Activated naive CD8-positive, alpha-beta T cell treated with anti-CD3 and anti-CD28 coated beads, Interleukin-2, amount 10 ng/mL, durations not matched to agents 7 days and 5 days (primary cell): ENCODE measurements at regions of chr2 and their contacts with region 1.

Region 1: GRCh38 chr2:39227628-39228412 is 15.9 kb downstream of the CDKL4 start:
- DNase-seq: peak; percentile 90
- ATAC-seq: peak; percentile 79
- H3K4me3 Mint-ChIP-seq: peak overlapping the region; percentile 79
- H3K27ac Mint-ChIP-seq: peak overlapping the region; percentile 90
- H3K4me1 Mint-ChIP-seq: peaks cover 46% of the 10 kb centered on the region
- H3K27me3 Mint-ChIP-seq: no peaks in the 10 kb centered on the region

Region 2: DNA sequence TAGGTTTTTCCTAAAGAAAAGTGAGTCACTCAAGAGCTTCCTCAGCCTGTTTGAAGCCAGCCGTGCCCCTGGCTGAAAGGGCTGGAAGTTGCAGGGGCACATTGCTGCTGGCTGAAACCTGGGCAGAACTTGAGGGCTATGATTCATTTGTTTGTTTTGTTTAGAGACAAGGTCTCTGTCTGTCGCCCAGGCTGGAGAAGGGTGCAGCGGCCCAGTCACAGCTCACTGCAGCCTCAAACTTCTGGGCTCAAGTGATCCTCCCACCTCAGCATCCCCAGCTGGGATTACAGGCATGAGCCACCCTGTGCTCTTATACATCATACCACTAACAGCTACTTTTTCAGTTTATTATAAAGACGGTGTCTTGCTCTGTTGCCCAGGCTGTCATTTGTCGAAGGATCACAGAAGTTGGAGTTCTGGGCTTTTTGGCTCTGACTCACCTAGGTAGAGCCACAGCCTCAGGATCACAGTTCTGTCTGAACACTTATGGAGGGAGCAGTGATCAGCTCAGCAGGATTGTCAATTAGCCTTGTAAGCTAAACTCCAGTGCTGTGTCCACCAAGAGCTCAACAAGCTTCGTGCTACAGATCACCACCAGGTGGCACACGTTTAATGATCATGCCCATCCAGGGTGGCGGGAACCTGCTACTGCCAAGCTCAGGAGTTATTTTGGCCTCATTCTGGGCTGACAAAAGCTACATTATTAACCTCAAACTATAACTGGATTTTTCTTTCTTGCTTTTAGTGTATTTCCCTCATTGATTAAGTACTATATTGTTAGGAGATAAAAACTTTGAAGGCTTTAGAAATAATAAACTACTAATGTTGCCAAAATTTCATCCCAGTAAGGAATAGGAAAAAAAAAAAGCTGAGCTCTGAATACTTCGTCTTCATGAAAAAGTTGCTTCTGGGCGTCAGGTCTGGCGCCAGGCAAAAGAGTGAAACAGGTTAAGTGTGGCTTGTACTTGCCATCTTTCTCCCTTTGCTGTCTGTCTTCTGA is 280.3 kb before region 1 on chr2:
- POLR2A ChIA-PET with region 1: interaction called, 15 read pairs
- DNase-seq: peak; percentile 58
- ATAC-seq: peak; percentile 85
- H3K4me3 Mint-ChIP-seq: no peak overlapping the region
- H3K27ac Mint-ChIP-seq: no peak overlapping the region
- H3K4me1 Mint-ChIP-seq: peaks cover 2% of the 10 kb centered on the region
- H3K27me3 Mint-ChIP-seq: peaks cover 8% of the 10 kb centered on the region

Region 3: GRCh38 chr2:39124000-39124745 is 103.6 kb before region 1 on chr2:
- POLR2A ChIA-PET with region 1: interaction called, 166 read pairs
- DNase-seq: peak; percentile 96
- ATAC-seq: peak; percentile 72
- H3K4me3 Mint-ChIP-seq: peak overlapping the region; percentile 95
- H3K27ac Mint-ChIP-seq: peak overlapping the region; percentile 96
- H3K4me1 Mint-ChIP-seq: peaks cover 53% of the 10 kb centered on the region
- H3K27me3 Mint-ChIP-seq: no peaks in the 10 kb centered on the region

Region 4: DNA sequence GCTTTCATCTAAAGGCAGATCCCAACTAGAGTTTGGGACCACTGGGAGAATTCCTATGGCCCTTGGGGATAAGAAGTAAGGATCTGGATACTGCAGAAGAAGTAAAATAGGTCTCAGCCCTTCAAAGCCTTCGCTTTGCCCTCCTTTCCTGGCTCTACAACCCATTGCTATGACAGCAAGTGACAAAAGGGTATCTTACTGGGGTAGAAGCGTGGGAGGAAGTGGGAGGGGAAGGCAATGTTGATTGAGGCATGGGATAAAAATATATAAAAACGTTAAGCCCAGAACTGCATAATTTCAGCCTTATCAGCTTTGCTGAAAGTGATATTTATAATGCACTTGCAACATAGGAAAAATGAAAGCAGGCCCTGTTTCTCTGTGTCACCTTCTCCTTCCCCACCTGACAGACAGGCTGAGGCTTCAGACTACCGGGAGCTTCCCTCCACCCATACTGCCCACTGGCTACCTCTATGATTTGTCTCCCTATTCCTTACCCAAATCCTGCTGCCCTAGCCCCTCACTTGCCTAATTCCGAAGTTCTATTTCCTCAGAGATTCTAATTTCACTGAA is 92.0 kb before region 1 on chr2:
- POLR2A ChIA-PET with region 1: interaction called, 16 read pairs
- DNase-seq: no peak
- ATAC-seq: peak; percentile 49
- H3K4me3 Mint-ChIP-seq: peak overlapping the region; percentile 62
- H3K27ac Mint-ChIP-seq: peak overlapping the region; percentile 97
- H3K4me1 Mint-ChIP-seq: peaks cover 68% of the 10 kb centered on the region
- H3K27me3 Mint-ChIP-seq: no peaks in the 10 kb centered on the region

Region 5: DNA sequence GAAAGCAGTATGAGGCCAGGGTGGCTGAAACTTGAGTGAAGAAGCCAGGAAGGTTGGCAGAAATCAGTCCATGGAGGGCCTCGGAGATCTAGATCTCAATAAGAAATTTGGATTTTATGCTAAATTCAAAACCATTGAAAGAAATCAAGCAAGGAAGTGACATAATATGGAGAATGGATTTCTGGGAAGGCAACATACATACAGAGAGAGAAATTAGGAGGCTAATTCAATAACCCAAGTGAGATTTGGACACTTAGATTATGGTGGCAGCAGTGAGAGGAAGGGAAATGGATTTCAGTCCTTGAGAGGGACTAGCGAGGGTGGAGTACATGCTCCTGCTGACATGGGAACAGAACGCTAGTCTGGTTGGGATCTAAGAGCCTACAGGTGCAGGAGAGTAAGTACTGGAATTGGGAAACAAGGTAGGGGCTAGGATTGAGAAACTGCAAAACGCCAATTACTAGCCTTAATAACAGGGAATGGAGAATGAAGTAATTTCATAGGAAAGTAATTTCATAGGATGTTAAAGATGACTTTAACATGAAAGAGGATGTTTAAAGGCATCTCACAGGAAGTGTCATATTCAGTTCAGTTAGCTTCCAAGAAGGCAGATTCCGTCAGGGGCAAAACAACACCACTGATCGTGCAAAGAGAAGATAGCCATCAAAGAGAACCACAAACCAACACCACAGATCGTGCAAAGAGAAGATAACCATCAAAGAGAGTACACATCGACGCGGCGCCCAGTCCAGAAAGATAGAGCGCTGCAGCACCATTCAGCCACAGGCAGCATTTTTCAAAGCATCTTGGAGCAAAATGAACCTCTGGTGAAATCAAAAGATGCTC is 11.3 kb before region 1 on chr2:
- POLR2A ChIA-PET with region 1: interaction called, 28 read pairs
- DNase-seq: peak; percentile 73
- ATAC-seq: peak; percentile 88
- H3K4me3 Mint-ChIP-seq: peak overlapping the region; percentile 71
- H3K27ac Mint-ChIP-seq: peak overlapping the region; percentile 96
- H3K4me1 Mint-ChIP-seq: peaks cover 68% of the 10 kb centered on the region
- H3K27me3 Mint-ChIP-seq: no peaks in the 10 kb centered on the region

Region 6: DNA sequence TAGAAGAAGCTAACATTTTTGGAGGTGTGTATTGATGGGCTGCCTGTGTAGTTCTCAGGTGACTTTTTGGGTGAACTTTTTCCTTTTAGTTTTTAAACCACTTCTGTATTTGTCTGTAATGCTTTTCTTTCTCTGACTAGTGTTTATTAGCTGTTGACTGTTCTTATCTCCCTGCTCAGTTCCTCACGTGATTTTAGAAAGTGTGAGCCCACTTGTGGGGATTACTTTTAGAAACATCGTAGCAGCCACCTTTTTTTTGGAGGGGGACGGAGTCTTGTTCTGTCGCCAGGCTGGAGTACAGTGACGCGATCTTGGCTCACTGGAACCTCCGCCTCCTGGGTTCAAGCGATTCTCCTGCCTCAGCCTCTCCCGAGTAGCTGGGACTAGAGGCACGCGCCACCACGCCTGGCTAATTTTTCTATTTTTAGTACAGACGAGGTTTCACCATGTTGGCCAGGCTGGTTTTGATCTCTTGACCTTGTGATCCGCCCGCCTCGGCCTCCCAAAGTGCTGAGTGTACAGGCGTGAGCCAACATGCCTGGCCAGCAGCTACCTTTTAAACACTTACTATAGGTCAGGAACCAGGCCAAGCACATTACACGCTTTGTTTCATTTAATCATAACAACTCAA is 25.2 kb after region 1 on chr2:
- POLR2A ChIA-PET with region 1: no interaction called
- DNase-seq: no peak
- ATAC-seq: no peak
- H3K4me3 Mint-ChIP-seq: no peak overlapping the region
- H3K27ac Mint-ChIP-seq: no peak overlapping the region
- H3K4me1 Mint-ChIP-seq: peaks cover 2% of the 10 kb centered on the region
- H3K27me3 Mint-ChIP-seq: no peaks in the 10 kb centered on the region

Region 7: DNA sequence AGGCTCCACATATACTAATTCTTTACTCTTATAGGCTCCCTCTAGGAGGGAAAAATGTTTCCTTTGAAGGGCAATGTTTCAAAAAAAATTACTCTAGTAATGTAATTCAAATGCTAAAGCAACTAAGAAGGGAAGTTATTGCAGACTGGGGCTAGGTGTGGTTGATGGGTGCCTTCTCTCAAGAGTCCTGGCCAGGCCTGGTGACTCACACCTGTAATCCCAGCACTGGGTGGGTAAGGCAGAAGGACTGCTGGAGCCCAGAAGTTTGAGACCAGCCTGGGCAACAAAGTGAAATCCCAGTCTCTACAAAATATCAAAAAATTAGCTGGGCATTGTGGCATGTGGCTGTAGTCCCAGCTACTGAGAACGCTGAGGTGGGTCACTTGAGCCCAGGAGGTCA is 47.2 kb after region 1 on chr2:
- POLR2A ChIA-PET with region 1: no interaction called
- DNase-seq: no peak
- ATAC-seq: no peak
- H3K4me3 Mint-ChIP-seq: no peak overlapping the region
- H3K27ac Mint-ChIP-seq: no peak overlapping the region
- H3K4me1 Mint-ChIP-seq: no peaks in the 10 kb centered on the region
- H3K27me3 Mint-ChIP-seq: no peaks in the 10 kb centered on the region

Region 8: DNA sequence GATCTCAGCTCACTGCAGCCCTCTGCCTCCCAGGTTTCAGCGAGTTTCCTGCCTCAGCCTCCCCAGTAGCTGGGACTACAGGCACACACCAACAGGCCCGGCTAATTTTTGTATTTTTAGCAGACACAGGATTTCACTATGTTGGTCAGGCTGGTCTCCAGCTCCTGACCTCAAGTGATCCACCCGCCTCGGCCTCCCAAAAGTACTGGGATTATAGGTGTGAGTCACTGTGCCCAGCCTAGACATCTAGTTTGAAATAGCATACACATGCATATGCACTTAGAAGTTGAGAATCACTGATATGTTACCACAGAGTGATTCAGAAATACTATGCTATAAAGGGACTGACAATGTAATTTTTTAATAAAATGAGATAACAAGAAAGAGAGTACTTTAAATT is 85.8 kb after region 1 on chr2:
- POLR2A ChIA-PET with region 1: no interaction called
- DNase-seq: no peak
- ATAC-seq: no peak
- H3K4me3 Mint-ChIP-seq: no peak overlapping the region
- H3K27ac Mint-ChIP-seq: no peak overlapping the region
- H3K4me1 Mint-ChIP-seq: no peaks in the 10 kb centered on the region
- H3K27me3 Mint-ChIP-seq: no peaks in the 10 kb centered on the region